AG04450 (cell line): ENCODE measurements at regions of chrX and their contacts with region 1.

Region 1: GRCh38 chrX:109890895-109891502 is 111.9 kb upstream of the TMEM164 start:
- DNase-seq: no peak
- H3K4me3 ChIP-seq: no peak overlapping the region
- H3K27ac ChIP-seq: no peak overlapping the region
- H3K27me3 ChIP-seq: no peaks in the 10 kb centered on the region
- CTCF ChIP-seq: peak; percentile 83

Region 2: DNA sequence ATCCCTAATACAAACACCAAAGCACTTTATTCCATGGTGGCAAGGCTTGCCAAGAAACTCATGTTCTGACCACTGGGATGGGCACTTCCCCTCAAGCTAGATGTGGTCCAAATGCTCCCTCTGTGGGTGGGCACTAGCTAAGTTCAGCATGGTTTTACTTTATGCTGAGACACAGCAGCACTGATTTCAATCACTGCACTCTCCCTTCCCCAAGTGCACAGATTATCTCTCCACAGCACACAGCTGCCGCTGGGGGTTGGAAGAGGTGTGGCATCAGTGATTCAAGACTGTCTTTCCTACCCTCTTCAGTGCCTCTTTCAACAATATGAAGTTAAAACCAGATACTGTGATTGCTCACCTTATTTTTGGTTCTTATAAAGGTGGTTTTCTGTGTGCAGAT is 392.6 kb before region 1 on chrX:
- CTCF ChIA-PET with region 1: interaction called, 10 read pairs
- POLR2A ChIA-PET with region 1: no interaction called
- DNase-seq: no peak
- H3K4me3 ChIP-seq: no peak overlapping the region
- H3K27ac ChIP-seq: no peak overlapping the region
- H3K27me3 ChIP-seq: peaks cover 3% of the 10 kb centered on the region
- CTCF ChIP-seq: no peak

Region 3: DNA sequence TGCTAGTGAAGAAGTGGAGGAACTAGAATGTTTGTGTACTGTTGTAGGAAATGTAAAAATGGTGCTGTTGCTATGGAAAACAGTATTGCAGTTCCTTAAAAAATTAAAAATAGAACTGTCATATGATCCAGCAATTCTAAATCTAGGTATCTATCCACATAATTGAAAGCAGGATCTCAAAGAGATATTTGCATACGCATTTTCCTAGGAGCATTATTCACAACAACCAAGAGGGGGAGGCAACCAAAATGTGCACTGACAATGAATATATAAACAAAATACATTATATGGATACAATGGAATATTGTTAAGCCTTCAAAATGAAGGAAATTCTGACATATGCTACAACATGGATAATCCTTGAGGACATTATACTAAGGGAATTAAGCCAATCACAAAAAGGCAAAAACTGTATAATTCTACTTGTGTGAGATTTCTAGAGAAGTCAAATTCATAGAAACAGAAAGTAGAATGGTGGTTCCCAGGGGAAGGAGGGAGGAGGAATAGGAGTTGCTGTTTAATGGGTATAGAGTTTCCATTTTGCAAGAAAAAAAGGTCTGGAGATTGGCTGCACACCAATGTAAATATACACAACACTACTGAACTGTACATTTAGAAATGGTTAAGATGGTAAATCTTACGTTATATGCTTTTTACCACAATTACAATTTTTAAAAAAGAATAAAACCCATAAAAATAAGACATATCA is 230.4 kb before region 1 on chrX:
- CTCF ChIA-PET with region 1: interaction called, 21 read pairs
- POLR2A ChIA-PET with region 1: no interaction called
- DNase-seq: no peak
- H3K4me3 ChIP-seq: no peak overlapping the region
- H3K27ac ChIP-seq: no peak overlapping the region
- H3K27me3 ChIP-seq: no peaks in the 10 kb centered on the region
- CTCF ChIP-seq: no peak

Region 4: GRCh38 chrX:109696146-109696740 is 194.8 kb before region 1 on chrX:
- CTCF ChIA-PET with region 1: interaction called, 12 read pairs
- POLR2A ChIA-PET with region 1: no interaction called
- DNase-seq: no peak
- H3K4me3 ChIP-seq: no peak overlapping the region
- H3K27ac ChIP-seq: no peak overlapping the region
- H3K27me3 ChIP-seq: no peaks in the 10 kb centered on the region
- CTCF ChIP-seq: no peak

Region 5: GRCh38 chrX:109732780-109733657 is 158.0 kb before region 1 on chrX and contains the start of gene ACSL4:
- CTCF ChIA-PET with region 1: interaction called, 10 read pairs
- POLR2A ChIA-PET with region 1: no interaction called
- DNase-seq: no peak
- H3K4me3 ChIP-seq: peak within 1 kb of the TSS; percentile 81
- H3K27ac ChIP-seq: peak within 1 kb of the TSS; percentile 91
- H3K27me3 ChIP-seq: no peaks in the 10 kb centered on the region
- CTCF ChIP-seq: no peak
- polyA plus RNA-seq, gene ACSL4: 124 and 157 TPM in 2 replicates

Region 6: GRCh38 chrX:109902665-109903064 is 11.7 kb after region 1 on chrX:
- CTCF ChIA-PET with region 1: interaction called, 21 read pairs
- POLR2A ChIA-PET with region 1: no interaction called
- DNase-seq: no peak
- H3K4me3 ChIP-seq: no peak overlapping the region
- H3K27ac ChIP-seq: no peak overlapping the region
- H3K27me3 ChIP-seq: peaks cover 5% of the 10 kb centered on the region
- CTCF ChIP-seq: no peak

Region 7: GRCh38 chrX:110066488-110067225 is 175.7 kb after region 1 on chrX:
- CTCF ChIA-PET with region 1: no interaction called
- POLR2A ChIA-PET with region 1: no interaction called
- DNase-seq: no peak
- H3K4me3 ChIP-seq: no peak overlapping the region
- H3K27ac ChIP-seq: no peak overlapping the region
- H3K27me3 ChIP-seq: no peaks in the 10 kb centered on the region
- CTCF ChIP-seq: no peak

Region 8: GRCh38 chrX:111010111-111010510 is 1119.1 kb after region 1 on chrX:
- CTCF ChIA-PET with region 1: no interaction called
- POLR2A ChIA-PET with region 1: no interaction called
- DNase-seq: no peak
- H3K4me3 ChIP-seq: no peak overlapping the region
- H3K27ac ChIP-seq: no peak overlapping the region
- H3K27me3 ChIP-seq: no peaks in the 10 kb centered on the region
- CTCF ChIP-seq: no peak